Activated CD8-positive, alpha-beta T cell treated with anti-CD3 and anti-CD28 coated beads, Interleukin-2, amount 10 ng/mL, durations not matched to agents 7 days and 5 days (primary cell): ENCODE measurements at regions of chr12 and their contacts with region 1.

Region 1: GRCh38 chr12:28190321-28191050 is at the start of gene CCDC91:
- DNase-seq: peak; percentile 91
- ATAC-seq: peak; percentile 84
- H3K4me3 Mint-ChIP-seq: peak within 1 kb of the TSS; percentile 96
- H3K27ac Mint-ChIP-seq: peak within 1 kb of the TSS; percentile 99
- H3K4me1 Mint-ChIP-seq: peaks cover 37% of the 10 kb centered on the region
- H3K27me3 Mint-ChIP-seq: no peaks in the 10 kb centered on the region
- total RNA-seq, gene CCDC91: 18.4 to 23.4 TPM

Region 2: DNA sequence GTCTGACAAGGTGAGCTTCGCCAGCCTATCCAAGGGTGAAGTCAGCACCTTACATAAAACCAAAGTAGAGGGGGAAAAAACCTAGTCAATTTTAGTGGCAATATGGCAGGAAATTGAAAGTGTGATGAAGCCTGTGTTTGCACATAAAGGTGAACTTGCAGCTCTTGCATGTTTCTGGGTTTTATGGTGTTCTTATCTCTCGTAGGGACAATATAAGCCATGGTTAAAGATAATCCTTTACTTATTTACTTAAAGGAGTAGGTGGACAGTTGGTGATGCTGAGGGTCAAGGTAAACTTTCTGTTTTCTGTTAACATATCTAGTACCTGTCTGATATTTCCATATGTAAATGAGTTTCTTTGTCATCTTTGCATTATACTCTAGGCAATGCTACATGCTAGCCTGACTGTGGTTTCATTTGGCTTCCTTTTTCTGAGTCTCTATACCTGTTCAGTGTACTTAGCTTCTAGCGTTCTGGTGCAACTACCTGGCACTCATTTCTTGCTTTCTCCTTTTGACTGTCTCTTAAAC is 32.6 kb after region 1 on chr12:
- CTCF ChIA-PET with region 1: interaction called, 3 read pairs
- POLR2A ChIA-PET with region 1: interaction called, 10 read pairs
- DNase-seq: peak; percentile 21
- ATAC-seq: peak; percentile 83
- H3K4me3 Mint-ChIP-seq: peak overlapping the region; percentile 47
- H3K27ac Mint-ChIP-seq: peak overlapping the region; percentile 62
- H3K4me1 Mint-ChIP-seq: peaks cover 40% of the 10 kb centered on the region
- H3K27me3 Mint-ChIP-seq: no peaks in the 10 kb centered on the region